PC-9 (cell line): ENCODE measurements at regions of chr4 and their contacts with region 1.

Region 1: DNA sequence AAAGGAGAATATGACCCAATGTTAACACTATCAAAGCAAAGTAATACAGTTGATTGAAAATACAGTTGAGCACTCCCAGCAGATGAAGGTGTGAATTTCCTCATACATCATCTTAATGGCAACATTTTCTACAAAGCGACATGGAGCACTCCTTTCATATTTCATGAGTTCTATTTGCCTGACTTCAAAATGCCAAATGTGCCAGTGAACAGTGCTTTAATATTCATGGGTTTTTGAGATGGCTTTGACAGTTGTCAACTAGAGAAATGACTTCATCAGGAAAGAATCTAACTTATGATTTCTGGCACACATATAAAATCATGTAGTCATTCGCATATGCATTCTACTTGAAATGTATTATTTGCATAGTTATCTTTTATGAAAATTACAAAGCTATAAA is 222.4 kb downstream of the GALNTL6 start:
- DNase-seq: no peak
- H3K4me3 ChIP-seq: no peak overlapping the region
- H3K27ac ChIP-seq: no peak overlapping the region
- H3K4me1 ChIP-seq: no peaks in the 10 kb centered on the region
- H3K27me3 ChIP-seq: no peaks in the 10 kb centered on the region
- CTCF ChIP-seq: no peak

Region 2: GRCh38 chr4:172356016-172356415 is 320.5 kb after region 1 on chr4:
- CTCF ChIA-PET with region 1: no interaction called
- POLR2A ChIA-PET with region 1: no interaction called
- intact Hi-C with region 1: loop called (anchors 5 kb)
- DNase-seq: no peak
- H3K4me3 ChIP-seq: no peak overlapping the region
- H3K27ac ChIP-seq: no peak overlapping the region
- H3K4me1 ChIP-seq: no peaks in the 10 kb centered on the region
- H3K27me3 ChIP-seq: no peaks in the 10 kb centered on the region
- CTCF ChIP-seq: no peak